ENCODE measurements at regions of chr5 and their contacts with region 1.

Region 1: GRCh38 chr5:81506900-81507588 is 113.1 kb upstream of the ACOT12 start:
- DNase-seq: peak in 1 of 2 donors; percentile 74
- ATAC-seq: peak; percentile 93 to 99 (median 95)
- H3K4me3 ChIP-seq: no peak overlapping the region
- H3K4me3 Mint-ChIP-seq: peak overlapping the region; percentile 23
- H3K27ac ChIP-seq: no peak overlapping the region
- H3K27ac Mint-ChIP-seq: peak overlapping the region in 1 of 2 donors; percentile 44
- H3K4me1 ChIP-seq: no peaks in the 10 kb centered on the region
- H3K4me1 Mint-ChIP-seq: no peaks in the 10 kb centered on the region
- H3K27me3 ChIP-seq: no peaks in the 10 kb centered on the region
- H3K27me3 Mint-ChIP-seq: no peaks in the 10 kb centered on the region
- CTCF ChIP-seq: peak; percentile 67

Region 2: GRCh38 chr5:81728301-81728700 is 221.3 kb after region 1 on chr5:
- intact Hi-C with region 1: no loop called
- DNase-seq: no peak
- ATAC-seq: no peak
- H3K4me3 ChIP-seq: no peak overlapping the region
- H3K4me3 Mint-ChIP-seq: no peak overlapping the region
- H3K27ac ChIP-seq: no peak overlapping the region
- H3K27ac Mint-ChIP-seq: no peak overlapping the region
- H3K4me1 ChIP-seq: no peaks in the 10 kb centered on the region
- H3K4me1 Mint-ChIP-seq: peaks cover 0 to 6% of the 10 kb centered on the region in 2 donors
- H3K27me3 ChIP-seq: no peaks in the 10 kb centered on the region
- H3K27me3 Mint-ChIP-seq: peaks cover 0 to 2% of the 10 kb centered on the region in 2 donors
- CTCF ChIP-seq: no peak

Region 3: GRCh38 chr5:81838307-81838906 is 331.4 kb after region 1 on chr5:
- intact Hi-C with region 1: loop called (anchors 1 kb)
- DNase-seq: peak in 1 of 2 donors; percentile 68
- ATAC-seq: peak; percentile 72 to 81 (median 76)
- H3K4me3 ChIP-seq: no peak overlapping the region
- H3K4me3 Mint-ChIP-seq: no peak overlapping the region
- H3K27ac ChIP-seq: no peak overlapping the region
- H3K27ac Mint-ChIP-seq: no peak overlapping the region
- H3K4me1 ChIP-seq: no peaks in the 10 kb centered on the region
- H3K4me1 Mint-ChIP-seq: no peaks in the 10 kb centered on the region
- H3K27me3 ChIP-seq: no peaks in the 10 kb centered on the region
- H3K27me3 Mint-ChIP-seq: peaks cover 3 to 8% of the 10 kb centered on the region in 2 donors
- CTCF ChIP-seq: peak; percentile 46

Region 4: GRCh38 chr5:81971712-81972495 is 464.9 kb after region 1 on chr5 and contains the start of gene ATG10:
- intact Hi-C with region 1: loop called (anchors 1 kb)
- DNase-seq: peak; percentile 90 to 94
- ATAC-seq: peak; percentile 92 to 98 (median 93)
- H3K4me3 ChIP-seq: peak within 1 kb of the TSS; percentile 99
- H3K4me3 Mint-ChIP-seq: peak within 1 kb of the TSS; percentile 100
- H3K27ac ChIP-seq: peak within 1 kb of the TSS; percentile 99
- H3K27ac Mint-ChIP-seq: peak within 1 kb of the TSS; percentile 95 to 96
- H3K4me1 ChIP-seq: peaks cover 10% of the 10 kb centered on the region
- H3K4me1 Mint-ChIP-seq: peaks cover 15 to 19% of the 10 kb centered on the region in 2 donors
- H3K27me3 ChIP-seq: no peaks in the 10 kb centered on the region
- H3K27me3 Mint-ChIP-seq: no peaks in the 10 kb centered on the region
- CTCF ChIP-seq: no peak
- total RNA-seq, gene ATG10: 9.0 to 11.5 (median 11.4) TPM

Region 5: GRCh38 chr5:82165740-82166530 is 658.9 kb after region 1 on chr5:
- intact Hi-C with region 1: loop called (anchors 1 kb)
- DNase-seq: peak in 1 of 2 donors; percentile 77
- ATAC-seq: peak; percentile 78 to 100 (median 80)
- H3K4me3 ChIP-seq: no peak overlapping the region
- H3K4me3 Mint-ChIP-seq: no peak overlapping the region
- H3K27ac ChIP-seq: no peak overlapping the region
- H3K27ac Mint-ChIP-seq: no peak overlapping the region
- H3K4me1 ChIP-seq: no peaks in the 10 kb centered on the region
- H3K4me1 Mint-ChIP-seq: no peaks in the 10 kb centered on the region
- H3K27me3 ChIP-seq: no peaks in the 10 kb centered on the region
- H3K27me3 Mint-ChIP-seq: no peaks in the 10 kb centered on the region
- CTCF ChIP-seq: peak; percentile 58